IMR-90 (cell line): ENCODE measurements at regions of chr19 and their contacts with region 1.

Region 1: DNA sequence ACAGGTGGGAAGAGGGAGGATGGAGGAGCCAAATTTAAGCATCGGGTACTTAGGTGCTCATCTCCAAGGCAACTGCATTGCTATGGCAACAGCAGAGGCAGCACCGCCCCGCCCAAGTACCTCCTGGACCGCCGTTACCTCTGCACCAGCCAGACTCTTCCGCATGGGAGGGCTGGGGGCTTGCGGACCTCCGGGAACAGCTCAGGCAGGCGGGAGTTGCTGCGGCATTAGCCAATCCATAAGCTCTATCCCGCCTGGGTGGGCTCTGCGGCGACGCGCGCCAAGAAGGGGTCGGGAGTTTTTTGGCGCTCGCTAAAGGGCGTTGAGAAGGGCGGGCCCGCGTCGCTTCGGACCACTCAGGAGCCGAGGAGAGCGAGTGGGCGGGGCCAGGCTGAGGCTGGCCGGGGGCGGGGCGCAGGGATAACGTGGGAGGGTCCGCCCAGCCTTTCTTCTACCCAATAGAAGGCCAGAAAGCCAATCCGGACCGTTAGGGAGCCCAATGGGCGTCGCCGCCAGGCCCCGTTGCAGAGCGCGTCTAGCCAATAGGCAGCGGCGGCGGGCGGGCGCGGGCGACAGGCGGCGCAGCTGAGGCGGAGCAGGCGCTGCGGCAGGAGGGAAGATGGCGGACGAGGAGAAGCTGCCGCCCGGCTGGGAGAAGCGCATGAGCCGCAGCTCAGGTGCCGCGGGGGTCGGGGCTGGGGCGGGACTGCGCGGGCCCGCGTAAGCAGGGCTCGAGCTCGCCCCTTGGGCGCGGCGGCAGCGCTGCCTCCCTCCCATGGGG is at the start of gene PIN1:
- DNase-seq: peak; percentile 97
- ATAC-seq: peak; percentile 98
- H3K4me3 ChIP-seq: peak within 1 kb of the TSS; percentile 88
- H3K27ac ChIP-seq: peak within 1 kb of the TSS; percentile 44; the same call in 1 of the 2 replicates
- H3K4me1 ChIP-seq: no peaks in the 10 kb centered on the region; the same call in 1 of the 2 replicates
- H3K27me3 ChIP-seq: no peaks in the 10 kb centered on the region
- CTCF ChIP-seq: peak; percentile 82
- POLR2A ChIP-seq: peak; percentile 46; the same call in 1 of the 2 replicates
- RAD21 ChIP-seq: no peak
- total RNA-seq, gene PIN1: 76.0 and 77.2 TPM in 2 replicates

Region 2: DNA sequence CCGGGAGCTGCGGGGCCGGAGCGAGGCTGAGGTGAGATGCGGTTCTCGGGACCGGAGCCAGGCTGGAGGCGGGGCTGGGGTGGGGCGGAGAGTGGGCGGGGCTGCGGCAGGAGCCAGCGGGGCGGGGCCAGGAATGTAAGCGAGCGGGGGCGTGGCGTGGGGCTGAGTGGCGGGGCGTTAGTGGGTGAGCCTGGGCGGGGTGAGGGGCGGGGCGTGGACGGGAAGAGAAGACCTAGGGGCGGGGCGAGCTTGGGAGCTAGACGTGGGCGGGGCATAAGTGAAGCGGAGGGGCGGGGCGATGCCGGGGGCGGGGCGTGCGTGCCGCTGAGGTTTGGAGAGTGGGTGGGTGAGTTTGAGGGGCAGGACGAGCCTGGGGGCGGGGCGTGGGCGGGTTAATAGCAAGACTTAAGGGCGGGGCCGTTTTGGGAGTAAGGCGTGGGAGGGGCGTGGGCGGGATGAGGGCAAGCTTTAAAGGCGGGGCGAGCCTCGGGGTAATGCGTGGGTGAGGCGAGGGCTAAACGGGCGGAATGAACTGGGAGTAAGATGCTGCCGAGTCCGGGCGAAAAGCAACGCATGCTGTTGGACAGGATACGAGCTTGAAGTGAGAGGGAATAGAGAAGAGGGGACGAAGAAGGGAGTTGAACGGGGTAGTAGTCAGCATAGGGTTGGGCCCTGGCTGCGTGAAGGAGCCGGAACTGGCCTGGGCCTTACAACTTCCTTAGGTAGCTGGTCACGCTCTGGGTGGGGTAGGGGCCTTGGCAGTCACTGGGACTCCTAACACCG is 1914.2 kb before region 1 on chr19:
- CTCF ChIA-PET with region 1: no interaction called
- POLR2A ChIA-PET with region 1: interaction called, 18 read pairs
- dilution Hi-C with region 1: no loop called
- in situ Hi-C with region 1: no loop called
- intact Hi-C with region 1: no loop called
- DNase-seq: peak; percentile 94
- ATAC-seq: peak; percentile 75
- H3K4me3 ChIP-seq: peak overlapping the region; percentile 92
- H3K27ac ChIP-seq: peak overlapping the region; percentile 84
- H3K4me1 ChIP-seq: peaks cover 20% of the 10 kb centered on the region
- H3K27me3 ChIP-seq: peaks cover 6% of the 10 kb centered on the region
- CTCF ChIP-seq: no peak
- POLR2A ChIP-seq: peak; percentile 51; the same call in 1 of the 2 replicates
- RAD21 ChIP-seq: no peak